Mucosa of descending colon (tissue), 3 donors: ENCODE measurements at regions of chrX and their contacts with region 1.

Region 1: DNA sequence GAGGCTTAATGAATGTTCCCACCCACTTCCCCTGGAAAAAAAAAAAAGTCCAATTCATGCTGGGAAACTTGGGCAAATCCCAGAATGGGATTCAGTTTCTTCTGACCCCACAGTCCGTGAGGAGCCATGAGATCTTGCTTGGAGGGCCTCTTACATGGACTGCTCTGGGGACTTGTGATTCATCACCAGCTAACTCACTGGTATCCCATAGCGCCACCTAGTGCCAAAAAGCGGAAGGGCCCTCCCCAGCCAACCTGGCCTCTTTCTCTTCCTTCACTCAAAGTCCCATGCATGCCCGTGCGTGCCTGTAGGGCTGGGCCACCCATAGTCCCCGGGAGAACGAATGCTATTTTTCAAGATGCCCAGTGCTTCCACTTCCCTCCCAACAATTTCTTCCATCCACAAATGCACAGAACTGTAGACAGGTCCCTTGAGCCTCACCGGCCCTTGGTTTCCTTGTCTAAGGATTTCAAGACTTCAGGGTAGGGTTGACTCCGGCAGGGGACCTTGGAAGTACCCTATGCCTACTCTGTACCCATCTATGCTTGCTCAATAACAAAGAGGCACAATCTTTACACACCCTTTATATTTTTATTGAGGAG is 5.1 kb downstream of the RTL5 start:
- DNase-seq: peak; percentile 71 to 90 (median 84)
- ATAC-seq: peak; percentile 88
- H3K4me3 ChIP-seq: no peak overlapping the region
- H3K4me1 ChIP-seq: no peaks in the 10 kb centered on the region
- CTCF ChIP-seq: peak; percentile 58

Region 2: GRCh38 chrX:71974916-71975315 is 151.7 kb before region 1 on chrX:
- intact Hi-C with region 1: no loop called
- DNase-seq: no peak
- ATAC-seq: no peak
- H3K4me3 ChIP-seq: no peak overlapping the region
- H3K4me1 ChIP-seq: no peaks in the 10 kb centered on the region
- CTCF ChIP-seq: no peak

Region 3: GRCh38 chrX:72021975-72022374 is 104.7 kb before region 1 on chrX:
- intact Hi-C with region 1: loop called in 1 of 2 experiments (anchors 10 kb)
- DNase-seq: no peak
- ATAC-seq: no peak
- H3K4me3 ChIP-seq: no peak overlapping the region
- H3K4me1 ChIP-seq: no peaks in the 10 kb centered on the region
- CTCF ChIP-seq: no peak

Region 4: GRCh38 chrX:72181178-72182125 is 54.8 kb after region 1 on chrX and contains the start of gene PIN4:
- intact Hi-C with region 1: no loop called
- DNase-seq: peak; percentile 91 to 93 (median 92)
- ATAC-seq: peak; percentile 98
- H3K4me3 ChIP-seq: peak within 1 kb of the TSS; percentile 26
- H3K4me1 ChIP-seq: no peaks in the 10 kb centered on the region
- CTCF ChIP-seq: no peak
- total RNA-seq, gene PIN4: 10.8 to 11.7 (median 11.3) TPM